ENCODE measurements at regions of chr10 and their contacts with region 1.

Region 1: GRCh38 chr10:22316285-22317120 is at the start of gene COMMD3:
- DNase-seq: peak; percentile 78 to 86 (median 82)
- H3K4me3 ChIP-seq: peak within 1 kb of the TSS; percentile 77 to 95
- H3K4me3 Mint-ChIP-seq: peak within 1 kb of the TSS; percentile 94 to 99 (median 98)
- H3K27ac ChIP-seq: peak within 1 kb of the TSS; percentile 71
- H3K27ac Mint-ChIP-seq: peak within 1 kb of the TSS; percentile 89 to 98 (median 98)
- H3K4me1 ChIP-seq: peaks cover 37% of the 10 kb centered on the region
- H3K4me1 Mint-ChIP-seq: peaks cover 22 to 50% (median 29%) of the 10 kb centered on the region in 4 donors
- H3K27me3 ChIP-seq: no peaks in the 10 kb centered on the region
- H3K27me3 Mint-ChIP-seq: peaks cover 3 to 4% of the 10 kb centered on the region in 2 donors
- total RNA-seq, gene COMMD3: 67.9 to 68.5 TPM

Region 2: DNA sequence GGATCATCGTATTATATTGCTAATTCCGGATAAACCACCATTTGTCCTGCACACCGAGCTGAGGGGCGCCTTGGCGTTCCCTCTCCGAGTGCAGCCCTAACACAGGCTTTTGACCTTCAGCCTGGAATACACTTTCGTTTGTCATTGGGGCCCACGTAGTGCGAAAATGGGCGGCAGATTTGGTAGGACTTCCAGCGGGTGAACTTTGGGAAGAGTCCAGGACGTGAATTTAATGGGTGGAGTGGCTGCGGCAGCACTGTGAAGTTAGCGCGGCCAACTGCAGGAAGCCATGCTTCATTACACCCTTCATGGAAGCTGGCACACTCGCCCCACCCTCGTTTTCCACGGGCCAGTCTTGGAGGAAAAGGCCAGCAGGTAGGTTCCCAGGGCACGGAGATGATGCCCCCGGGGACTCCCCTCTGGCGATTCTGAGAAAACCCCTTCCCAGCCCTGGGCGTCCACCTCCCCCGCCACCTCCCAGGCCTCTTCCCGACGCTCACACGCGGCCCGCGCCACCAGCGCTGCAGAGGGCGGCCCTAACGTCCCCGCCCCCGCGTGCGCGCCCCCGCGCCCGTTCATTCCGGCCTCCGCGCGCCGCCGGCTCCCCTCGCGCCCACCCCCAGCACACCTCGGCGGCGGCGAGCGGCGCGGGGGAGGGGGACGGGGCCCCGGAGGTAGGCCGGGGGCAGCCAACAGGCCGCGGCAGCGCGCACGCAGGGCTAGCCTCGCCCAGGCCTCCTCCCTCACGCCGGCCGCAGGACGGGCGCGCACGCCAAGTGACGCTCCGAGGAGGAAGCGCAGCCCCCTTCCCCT is 782.8 kb before region 1 on chr10 and contains the start of gene MLLT10:
- CTCF ChIA-PET with region 1: no interaction called
- POLR2A ChIA-PET with region 1: no interaction called
- intact Hi-C with region 1: loop called (anchors 1 kb)
- DNase-seq: peak; percentile 93 to 96 (median 95)
- H3K4me3 ChIP-seq: peak within 1 kb of the TSS; percentile 69 to 88
- H3K4me3 Mint-ChIP-seq: peak within 1 kb of the TSS; percentile 92 to 99 (median 95)
- H3K27ac ChIP-seq: peak within 1 kb of the TSS; percentile 63
- H3K27ac Mint-ChIP-seq: peak within 1 kb of the TSS; percentile 85 to 98 (median 95)
- H3K4me1 ChIP-seq: peaks cover 19% of the 10 kb centered on the region
- H3K4me1 Mint-ChIP-seq: peaks cover 10 to 33% (median 21%) of the 10 kb centered on the region in 4 donors
- H3K27me3 ChIP-seq: no peaks in the 10 kb centered on the region
- H3K27me3 Mint-ChIP-seq: no peaks in the 10 kb centered on the region
- total RNA-seq, gene MLLT10: 64.6 to 73.4 TPM

Region 3: DNA sequence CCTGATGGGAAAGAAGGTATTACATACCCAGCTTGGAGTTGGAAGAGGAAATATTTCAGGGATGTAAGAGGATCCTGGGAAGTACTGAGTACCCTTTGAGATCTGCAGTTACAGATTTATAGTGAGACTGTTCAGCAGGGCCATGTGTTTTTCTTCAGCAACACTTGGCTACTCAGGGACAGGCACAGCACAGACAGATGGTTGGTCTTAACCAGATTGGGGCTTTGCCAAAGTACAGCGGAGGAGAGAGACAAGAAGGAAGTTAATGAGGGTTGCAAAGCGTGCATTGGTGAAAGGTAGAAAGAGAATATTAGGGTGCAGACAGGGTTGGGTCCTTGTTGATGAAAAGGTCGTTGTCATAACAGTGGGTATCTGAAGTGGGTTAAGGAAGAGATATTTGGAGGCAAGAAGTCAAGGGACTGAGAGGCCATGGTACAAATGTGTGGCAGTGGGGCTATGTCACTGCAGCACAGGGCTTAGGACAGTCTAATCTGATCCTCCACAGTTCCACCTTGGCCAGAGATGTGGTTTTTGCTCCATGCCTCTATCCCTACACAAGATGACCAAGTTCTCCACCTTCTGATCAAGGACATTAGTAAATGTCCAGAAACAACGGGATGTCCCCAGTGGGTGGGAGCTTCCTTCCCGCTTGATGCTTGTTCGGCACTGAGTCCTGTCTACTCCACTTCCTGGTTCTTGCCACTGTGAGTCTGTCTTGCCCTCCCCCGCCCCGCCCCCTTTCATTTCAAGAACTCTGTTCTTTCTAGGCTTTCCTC is 294.1 kb before region 1 on chr10:
- CTCF ChIA-PET with region 1: no interaction called
- POLR2A ChIA-PET with region 1: interaction called, 5 read pairs
- intact Hi-C with region 1: loop called (anchors 5 kb)
- DNase-seq: peak; percentile 51 to 75 (median 60)
- H3K4me3 ChIP-seq: peak overlapping the region in 1 of 2 donors; percentile 39
- H3K4me3 Mint-ChIP-seq: peak overlapping the region; percentile 69 to 91 (median 86)
- H3K27ac ChIP-seq: peak overlapping the region; percentile 45
- H3K27ac Mint-ChIP-seq: peak overlapping the region; percentile 75 to 97 (median 95)
- H3K4me1 ChIP-seq: peaks cover 18% of the 10 kb centered on the region
- H3K4me1 Mint-ChIP-seq: peaks cover 15 to 21% (median 19%) of the 10 kb centered on the region in 4 donors
- H3K27me3 ChIP-seq: no peaks in the 10 kb centered on the region
- H3K27me3 Mint-ChIP-seq: peaks cover 0 to 4% of the 10 kb centered on the region in 2 donors

Region 4: DNA sequence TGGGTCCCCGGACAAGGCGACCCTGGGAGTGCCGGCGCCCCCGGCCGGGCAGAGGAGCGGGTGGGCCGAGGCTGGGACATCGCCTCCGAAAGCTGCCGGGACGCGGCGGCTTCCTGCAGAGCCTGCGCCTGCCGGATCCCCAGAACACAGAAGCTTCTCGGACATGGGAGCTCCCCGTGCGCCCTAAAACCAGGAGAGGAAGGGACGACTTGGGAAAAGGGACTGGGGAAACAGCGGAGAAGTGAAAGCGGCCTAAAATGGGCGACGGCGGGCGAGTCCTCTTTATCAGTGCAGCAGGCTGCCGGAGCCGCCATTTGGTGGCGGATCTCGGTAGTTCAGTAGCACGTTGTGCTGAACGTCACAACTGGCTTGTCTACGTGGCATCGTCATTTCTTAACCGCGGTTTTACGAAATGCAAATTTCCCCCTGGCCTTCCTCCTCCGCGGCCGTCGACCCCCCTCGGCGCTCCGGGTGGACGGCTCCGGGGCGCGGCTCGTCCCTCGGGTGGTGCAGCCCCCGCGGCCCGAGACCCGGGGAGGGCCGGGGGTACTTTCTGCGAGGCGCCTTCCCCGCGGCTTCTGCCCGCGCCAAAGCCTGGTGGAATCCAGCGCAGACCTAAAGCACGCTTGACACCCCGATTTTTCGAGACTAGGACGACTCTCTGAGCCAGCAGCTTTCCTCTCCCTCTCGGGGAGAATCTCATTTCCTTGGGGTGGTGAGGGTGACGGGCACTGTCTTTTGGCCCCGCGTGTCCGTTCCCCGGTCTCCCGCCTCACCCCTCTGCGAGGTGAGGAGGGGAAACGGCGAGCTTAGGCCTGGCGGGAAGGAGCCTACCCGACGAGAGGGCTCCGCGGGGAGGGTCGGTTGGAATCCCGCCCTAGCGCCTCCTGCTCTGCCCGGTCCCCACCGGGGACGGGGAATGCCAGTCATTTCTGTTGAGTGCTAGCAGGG is 18.9 kb after region 1 on chr10:
- CTCF ChIA-PET with region 1: interaction called, 10 read pairs
- POLR2A ChIA-PET with region 1: interaction called, 26 read pairs
- intact Hi-C with region 1: loop called (anchors 1 kb)
- DNase-seq: peak; percentile 80 to 88 (median 84)
- H3K4me3 ChIP-seq: peak overlapping the region; percentile 9 to 52
- H3K4me3 Mint-ChIP-seq: peak overlapping the region; percentile 84 to 96 (median 87)
- H3K27ac ChIP-seq: peak overlapping the region; percentile 58
- H3K27ac Mint-ChIP-seq: peak overlapping the region; percentile 92 to 96 (median 95)
- H3K4me1 ChIP-seq: peaks cover 59% of the 10 kb centered on the region
- H3K4me1 Mint-ChIP-seq: peaks cover 23 to 54% (median 34%) of the 10 kb centered on the region in 4 donors
- H3K27me3 ChIP-seq: peaks cover 45% of the 10 kb centered on the region
- H3K27me3 Mint-ChIP-seq: peaks cover 23 to 40% of the 10 kb centered on the region in 2 donors

Region 5: DNA sequence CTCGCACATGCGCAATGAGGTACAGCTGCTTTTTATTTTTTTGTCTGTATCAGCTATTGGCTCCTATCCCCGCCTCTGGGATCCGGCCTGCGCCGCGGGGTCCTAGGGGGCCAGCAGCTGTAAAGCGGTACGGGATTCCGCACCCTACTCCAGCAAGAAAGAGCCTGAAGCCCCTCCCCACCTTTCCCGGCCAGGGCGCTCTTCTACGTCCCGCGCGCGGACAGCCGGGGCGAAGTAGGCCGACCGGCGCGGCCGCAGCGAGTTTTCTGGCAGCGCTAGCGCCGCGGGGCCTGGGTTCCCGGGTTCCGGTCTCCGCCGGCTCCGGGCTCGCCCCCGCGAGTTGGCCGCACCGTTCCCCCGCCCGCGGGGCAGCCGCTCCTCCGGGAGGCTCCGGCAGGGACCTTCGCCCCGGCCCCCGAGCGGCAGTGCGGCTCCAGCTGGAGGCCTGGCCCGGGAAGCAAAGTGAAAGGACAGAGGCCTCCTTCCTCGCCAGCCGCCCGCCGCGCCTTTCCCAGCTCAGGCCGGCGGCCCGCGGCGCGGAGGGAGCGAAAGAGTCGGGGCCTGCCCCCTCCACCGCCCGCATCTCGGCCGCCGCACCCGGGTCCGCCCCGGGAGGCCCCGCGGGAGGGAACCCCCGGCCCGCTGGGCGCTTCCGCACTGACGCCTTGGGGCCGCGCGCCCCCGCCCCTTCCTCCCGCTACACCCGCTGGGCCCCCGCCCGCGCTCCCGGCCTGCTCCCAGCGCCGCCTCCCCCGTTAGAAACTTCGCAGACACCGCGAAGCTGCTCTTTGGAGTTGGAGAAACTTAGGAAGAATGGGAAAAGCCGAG is 24.1 kb after region 1 on chr10:
- CTCF ChIA-PET with region 1: interaction called, 5 read pairs
- POLR2A ChIA-PET with region 1: no interaction called
- intact Hi-C with region 1: loop called (anchors 2 kb)
- DNase-seq: peak; percentile 70 to 77 (median 74)
- H3K4me3 ChIP-seq: peak overlapping the region in 1 of 2 donors; percentile 52
- H3K4me3 Mint-ChIP-seq: peak overlapping the region; percentile 87 to 97 (median 90)
- H3K27ac ChIP-seq: peak overlapping the region; percentile 40
- H3K27ac Mint-ChIP-seq: peak overlapping the region; percentile 86 to 97 (median 93)
- H3K4me1 ChIP-seq: peaks cover 30% of the 10 kb centered on the region
- H3K4me1 Mint-ChIP-seq: peaks cover 9 to 45% (median 23%) of the 10 kb centered on the region in 4 donors
- H3K27me3 ChIP-seq: peaks cover 90% of the 10 kb centered on the region
- H3K27me3 Mint-ChIP-seq: peaks cover 45 to 61% of the 10 kb centered on the region in 2 donors

Measured in CD4-positive, alpha-beta memory T cell (primary cell).